ENCODE measurements at regions of chr5 and their contacts with region 1.

Region 1: GRCh38 chr5:107673368-107674136 is 2.8 kb upstream of the EFNA5 start:
- DNase-seq: peak; percentile 73 to 79
- ATAC-seq: peak; percentile 76 to 85 (median 77)
- H3K4me3 ChIP-seq: peak overlapping the region; percentile 41
- H3K4me3 Mint-ChIP-seq: peak overlapping the region; percentile 89
- H3K27ac ChIP-seq: no peak overlapping the region
- H3K27ac Mint-ChIP-seq: peak overlapping the region; percentile 5 to 11
- H3K4me1 ChIP-seq: peaks cover 46% of the 10 kb centered on the region
- H3K4me1 Mint-ChIP-seq: peaks cover 25 to 39% of the 10 kb centered on the region in 2 donors
- H3K27me3 ChIP-seq: peaks cover 66% of the 10 kb centered on the region
- H3K27me3 Mint-ChIP-seq: peaks cover 46 to 58% of the 10 kb centered on the region in 2 donors
- CTCF ChIP-seq: peak; percentile 99

Region 2: GRCh38 chr5:106269252-106269843 is 1404.2 kb before region 1 on chr5:
- intact Hi-C with region 1: loop called (anchors 10 kb)
- DNase-seq: no peak
- ATAC-seq: no peak
- H3K4me3 ChIP-seq: no peak overlapping the region
- H3K4me3 Mint-ChIP-seq: no peak overlapping the region
- H3K27ac ChIP-seq: no peak overlapping the region
- H3K27ac Mint-ChIP-seq: no peak overlapping the region
- H3K4me1 ChIP-seq: no peaks in the 10 kb centered on the region
- H3K4me1 Mint-ChIP-seq: no peaks in the 10 kb centered on the region
- H3K27me3 ChIP-seq: no peaks in the 10 kb centered on the region
- H3K27me3 Mint-ChIP-seq: no peaks in the 10 kb centered on the region
- CTCF ChIP-seq: no peak

Region 3: GRCh38 chr5:107300721-107301327 is 372.7 kb before region 1 on chr5:
- intact Hi-C with region 1: loop called (anchors 10 kb)
- DNase-seq: no peak
- ATAC-seq: no peak
- H3K4me3 ChIP-seq: no peak overlapping the region
- H3K4me3 Mint-ChIP-seq: no peak overlapping the region
- H3K27ac ChIP-seq: no peak overlapping the region
- H3K27ac Mint-ChIP-seq: no peak overlapping the region
- H3K4me1 ChIP-seq: peaks cover 2% of the 10 kb centered on the region
- H3K4me1 Mint-ChIP-seq: peaks cover 34 to 38% of the 10 kb centered on the region in 2 donors
- H3K27me3 ChIP-seq: no peaks in the 10 kb centered on the region
- H3K27me3 Mint-ChIP-seq: no peaks in the 10 kb centered on the region
- CTCF ChIP-seq: no peak

Region 4: DNA sequence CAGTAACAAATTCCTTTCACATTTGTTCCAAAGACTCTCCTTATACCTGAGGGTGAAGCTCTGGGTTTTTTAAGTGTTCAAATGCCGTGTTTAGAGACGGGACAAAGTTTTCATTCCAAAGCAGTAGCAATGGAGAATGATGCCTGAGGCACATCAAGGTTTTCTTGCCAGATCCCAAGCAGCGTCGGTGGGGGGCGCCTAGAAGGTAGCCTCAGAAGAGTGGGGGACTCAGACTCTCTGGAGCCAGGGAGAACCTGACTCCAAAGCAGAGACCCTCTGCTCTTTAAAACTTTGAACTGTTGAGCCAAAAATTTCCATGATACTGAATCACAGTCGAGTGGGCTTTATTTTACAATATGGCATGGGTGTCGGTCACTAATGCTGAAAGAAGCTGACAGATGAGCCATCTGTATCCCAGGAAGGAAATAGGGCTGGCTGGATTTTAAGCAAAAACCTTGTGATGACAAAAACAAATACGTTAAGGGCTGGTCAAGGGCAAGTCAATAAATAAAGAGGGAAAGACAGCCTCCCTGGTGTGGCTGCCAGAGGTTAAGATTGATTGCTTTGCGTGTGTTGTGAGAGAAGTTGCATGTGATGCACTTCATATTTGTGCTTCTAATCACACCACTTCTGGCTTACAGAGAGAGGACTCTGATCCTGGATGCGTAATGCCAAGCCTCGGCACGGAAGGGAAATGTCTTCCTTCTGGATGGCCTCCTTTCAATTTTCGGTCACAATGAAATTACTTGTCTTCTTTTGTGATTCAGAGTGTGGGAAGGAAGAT is 158.3 kb after region 1 on chr5:
- intact Hi-C with region 1: no loop called
- DNase-seq: no peak
- ATAC-seq: no peak
- H3K4me3 ChIP-seq: no peak overlapping the region
- H3K4me3 Mint-ChIP-seq: no peak overlapping the region
- H3K27ac ChIP-seq: no peak overlapping the region
- H3K27ac Mint-ChIP-seq: no peak overlapping the region
- H3K4me1 ChIP-seq: no peaks in the 10 kb centered on the region
- H3K4me1 Mint-ChIP-seq: no peaks in the 10 kb centered on the region
- H3K27me3 ChIP-seq: no peaks in the 10 kb centered on the region
- H3K27me3 Mint-ChIP-seq: peaks cover 7 to 29% of the 10 kb centered on the region in 2 donors
- CTCF ChIP-seq: no peak

Measured in natural killer cell (primary cell).